PC-3 (cell line): ENCODE measurements at regions of chr1 and their contacts with region 1.

Region 1: DNA sequence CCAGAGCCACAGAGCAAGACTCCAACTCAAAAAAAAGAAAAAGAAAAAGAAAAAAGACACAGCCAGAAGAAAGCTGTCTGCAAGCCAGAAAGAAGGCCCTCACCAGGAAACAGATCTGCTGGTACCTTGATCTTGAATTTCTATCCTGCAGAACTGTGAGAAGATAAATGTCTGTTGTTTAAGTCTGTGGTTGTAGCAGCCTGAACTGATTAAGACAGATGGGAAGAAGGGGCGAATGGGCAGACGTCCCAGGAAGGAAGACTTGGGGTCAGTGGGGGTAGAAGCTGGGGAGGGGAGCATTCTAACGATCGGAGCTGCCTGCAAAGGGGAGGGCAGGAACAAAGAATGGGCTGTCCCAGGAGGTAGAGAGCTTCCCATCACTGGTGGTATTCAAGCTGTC is 6.3 kb downstream of the SLC2A7 start:
- DNase-seq: no peak
- ATAC-seq: no peak
- H3K4me3 ChIP-seq: no peak overlapping the region
- H3K27ac ChIP-seq: no peak overlapping the region
- H3K4me1 ChIP-seq: no peaks in the 10 kb centered on the region
- H3K27me3 ChIP-seq: no peaks in the 10 kb centered on the region
- CTCF ChIP-seq: no peak

Region 2: DNA sequence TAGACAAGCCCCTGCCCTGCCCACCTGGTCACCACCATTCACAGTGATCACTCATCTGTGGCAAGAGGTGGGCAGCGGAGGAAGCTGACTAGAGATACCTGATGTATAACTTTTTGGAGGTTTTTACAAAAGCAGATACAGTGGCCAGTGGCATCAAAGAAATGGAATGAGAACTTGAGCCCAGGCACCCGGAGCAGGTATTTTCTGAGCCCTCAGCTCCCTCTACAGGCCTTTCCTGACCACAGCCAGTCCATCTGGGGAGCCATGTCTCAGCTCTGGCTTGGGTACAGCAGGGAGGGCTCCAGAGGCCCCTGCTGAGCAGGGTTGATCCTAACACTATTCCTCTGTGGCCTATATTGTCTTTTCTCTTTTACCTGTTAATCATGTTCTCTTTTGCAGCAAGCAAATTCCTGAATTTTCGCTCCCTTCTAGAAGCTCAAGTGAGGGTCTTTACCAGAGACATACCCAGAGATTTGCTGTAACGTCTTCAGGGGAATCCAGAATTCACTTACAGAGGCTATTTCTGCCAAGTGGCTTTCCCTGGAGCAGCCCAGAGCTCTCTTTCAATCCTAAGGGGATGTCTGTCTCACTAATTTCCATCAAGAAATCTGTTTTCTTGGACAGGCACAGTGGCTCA is 81.7 kb after region 1 on chr1:
- CTCF ChIA-PET with region 1: no interaction called
- POLR2A ChIA-PET with region 1: no interaction called
- intact Hi-C with region 1: loop called (anchors 5 kb)
- DNase-seq: peak; percentile 56
- ATAC-seq: peak; percentile 96
- H3K4me3 ChIP-seq: no peak overlapping the region
- H3K27ac ChIP-seq: no peak overlapping the region
- H3K4me1 ChIP-seq: no peaks in the 10 kb centered on the region
- H3K27me3 ChIP-seq: no peaks in the 10 kb centered on the region
- CTCF ChIP-seq: peak; percentile 77